GM12878 (cell line): ENCODE measurements at regions of chr7 and their contacts with region 1.

Region 1: GRCh38 chr7:95684037-95684436 is 87.7 kb upstream of the PDK4 start:
- DNase-seq: no peak
- ATAC-seq: peak; percentile 67
- H3K4me3 ChIP-seq: no peak overlapping the region
- H3K27ac ChIP-seq: no peak overlapping the region
- H3K4me1 ChIP-seq: no peaks in the 10 kb centered on the region
- H3K27me3 ChIP-seq: no peaks in the 10 kb centered on the region; a peak in 1 of 4 replicates
- CTCF ChIP-seq: peak; percentile 21 to 37 (median 26); a peak in 3 of 6 replicates
- EP300 ChIP-seq: no peak
- POLR2A ChIP-seq: no peak
- RAD21 ChIP-seq: peak; percentile 52

Region 2: GRCh38 chr7:95517458-95517857 is 166.6 kb before region 1 on chr7:
- CTCF ChIA-PET with region 1: interaction called, 655 read pairs
- POLR2A ChIA-PET with region 1: no interaction called
- RAD21 ChIA-PET with region 1: interaction called, 288 read pairs
- SMC1A ChIA-PET with region 1: interaction called, 238 read pairs
- in situ Hi-C with region 1: loop called (anchors 5 kb)
- intact Hi-C with region 1: no loop called
- DNase-seq: no peak
- ATAC-seq: peak; percentile 86
- H3K4me3 ChIP-seq: no peak overlapping the region
- H3K27ac ChIP-seq: no peak overlapping the region
- H3K4me1 ChIP-seq: no peaks in the 10 kb centered on the region
- H3K27me3 ChIP-seq: no peaks in the 10 kb centered on the region
- CTCF ChIP-seq: no peak
- EP300 ChIP-seq: no peak
- POLR2A ChIP-seq: no peak
- RAD21 ChIP-seq: no peak

Region 3: DNA sequence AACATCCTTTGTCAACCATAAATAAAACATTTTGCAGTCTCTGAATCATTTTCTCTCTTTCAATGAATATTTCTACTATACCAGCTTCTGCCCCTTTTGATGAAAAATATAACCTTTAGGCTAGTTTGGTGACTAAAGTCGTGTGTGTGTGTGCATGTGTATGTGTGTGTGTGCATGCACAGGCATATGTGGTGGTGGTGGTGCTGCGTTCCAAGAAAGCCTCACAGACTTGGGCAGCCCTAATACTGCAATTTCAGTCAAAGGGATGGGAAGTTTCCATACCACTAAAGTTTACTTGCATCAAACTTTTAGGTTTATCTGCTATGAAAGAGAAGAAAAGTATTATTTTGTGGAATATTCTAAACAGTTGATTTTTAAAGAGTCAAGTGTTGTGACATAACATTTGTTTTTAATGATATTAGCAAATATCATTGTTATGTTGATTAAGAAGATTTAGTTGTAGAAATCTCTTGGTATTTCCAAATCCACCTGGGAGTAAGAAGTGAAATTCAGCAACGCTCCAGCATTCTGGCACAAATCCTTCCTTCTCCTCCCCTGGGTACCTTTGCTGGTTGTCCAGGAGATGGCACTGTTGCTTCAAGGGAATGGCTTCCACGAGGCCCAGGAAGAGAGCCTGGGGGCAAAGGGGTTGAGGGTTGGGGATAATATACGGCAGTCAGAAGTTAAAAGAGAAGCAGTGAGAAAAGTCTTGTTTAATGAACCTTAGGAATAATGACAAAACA is 156.8 kb before region 1 on chr7:
- CTCF ChIA-PET with region 1: interaction called, 655 read pairs
- POLR2A ChIA-PET with region 1: interaction called, 3 read pairs
- RAD21 ChIA-PET with region 1: interaction called, 207 read pairs
- SMC1A ChIA-PET with region 1: interaction called, 448 read pairs
- in situ Hi-C with region 1: no loop called
- intact Hi-C with region 1: loop called (anchors 1 kb)
- DNase-seq: no peak
- ATAC-seq: peak; percentile 92
- H3K4me3 ChIP-seq: no peak overlapping the region
- H3K27ac ChIP-seq: no peak overlapping the region
- H3K4me1 ChIP-seq: no peaks in the 10 kb centered on the region
- H3K27me3 ChIP-seq: no peaks in the 10 kb centered on the region
- CTCF ChIP-seq: peak; percentile 73 to 83 (median 82)
- EP300 ChIP-seq: no peak
- POLR2A ChIP-seq: no peak
- RAD21 ChIP-seq: peak; percentile 96

Region 4: GRCh38 chr7:95534796-95535195 is 149.2 kb before region 1 on chr7:
- CTCF ChIA-PET with region 1: interaction called, 655 read pairs
- POLR2A ChIA-PET with region 1: no interaction called
- RAD21 ChIA-PET with region 1: interaction called, 207 read pairs
- SMC1A ChIA-PET with region 1: interaction called, 448 read pairs
- in situ Hi-C with region 1: no loop called
- intact Hi-C with region 1: no loop called
- DNase-seq: no peak
- ATAC-seq: no peak
- H3K4me3 ChIP-seq: no peak overlapping the region
- H3K27ac ChIP-seq: no peak overlapping the region
- H3K4me1 ChIP-seq: no peaks in the 10 kb centered on the region
- H3K27me3 ChIP-seq: no peaks in the 10 kb centered on the region; a peak in 1 of 4 replicates
- CTCF ChIP-seq: no peak
- EP300 ChIP-seq: no peak
- POLR2A ChIP-seq: no peak
- RAD21 ChIP-seq: no peak

Region 5: DNA sequence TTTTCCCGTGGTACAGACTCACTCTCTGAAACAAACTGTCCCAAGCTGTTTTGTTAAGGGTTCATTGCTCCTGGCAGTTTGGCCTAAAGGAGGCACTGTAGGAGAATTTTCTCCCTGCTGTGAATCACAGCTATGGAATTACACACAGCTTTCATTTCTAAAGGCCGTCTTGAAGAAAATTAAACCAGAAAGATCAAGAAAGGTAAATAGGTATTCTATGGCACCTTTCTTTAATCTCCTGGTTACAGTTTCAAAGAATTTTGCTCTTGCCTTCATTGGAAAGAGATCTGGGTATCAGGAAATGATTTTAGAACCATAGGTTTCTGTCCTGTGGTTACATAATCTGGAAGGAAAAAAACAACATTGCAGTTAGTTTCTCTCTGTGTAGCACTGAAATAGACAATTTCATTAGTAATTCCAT is 138.9 kb before region 1 on chr7:
- CTCF ChIA-PET with region 1: interaction called, 146 read pairs
- POLR2A ChIA-PET with region 1: no interaction called
- RAD21 ChIA-PET with region 1: interaction called, 81 read pairs
- SMC1A ChIA-PET with region 1: interaction called, 448 read pairs
- in situ Hi-C with region 1: no loop called
- intact Hi-C with region 1: no loop called
- DNase-seq: no peak
- ATAC-seq: peak; percentile 47; the same call in 1 of the 3 replicates
- H3K4me3 ChIP-seq: no peak overlapping the region
- H3K27ac ChIP-seq: no peak overlapping the region
- H3K4me1 ChIP-seq: no peaks in the 10 kb centered on the region
- H3K27me3 ChIP-seq: no peaks in the 10 kb centered on the region; a peak in 1 of 4 replicates
- CTCF ChIP-seq: peak; percentile 14 to 38 (median 32); a peak in 4 of 6 replicates
- EP300 ChIP-seq: no peak
- POLR2A ChIP-seq: no peak
- RAD21 ChIP-seq: peak; percentile 48

Region 6: GRCh38 chr7:95669513-95669912 is 14.5 kb before region 1 on chr7:
- CTCF ChIA-PET with region 1: interaction called, 36 read pairs
- POLR2A ChIA-PET with region 1: no interaction called
- RAD21 ChIA-PET with region 1: interaction called, 9 read pairs
- SMC1A ChIA-PET with region 1: interaction called, 5 read pairs
- in situ Hi-C with region 1: no loop called
- intact Hi-C with region 1: no loop called
- DNase-seq: no peak
- ATAC-seq: peak; percentile 93
- H3K4me3 ChIP-seq: no peak overlapping the region
- H3K27ac ChIP-seq: no peak overlapping the region
- H3K4me1 ChIP-seq: no peaks in the 10 kb centered on the region
- H3K27me3 ChIP-seq: no peaks in the 10 kb centered on the region
- CTCF ChIP-seq: no peak
- EP300 ChIP-seq: no peak
- POLR2A ChIP-seq: no peak
- RAD21 ChIP-seq: no peak

Region 7: GRCh38 chr7:95772298-95772770 is 88.3 kb after region 1 on chr7 and contains the start of gene DYNC1I1:
- CTCF ChIA-PET with region 1: no interaction called
- POLR2A ChIA-PET with region 1: no interaction called
- RAD21 ChIA-PET with region 1: no interaction called
- SMC1A ChIA-PET with region 1: no interaction called
- in situ Hi-C with region 1: no loop called
- intact Hi-C with region 1: no loop called
- DNase-seq: no peak
- ATAC-seq: peak; percentile 94
- H3K4me3 ChIP-seq: peak within 1 kb of the TSS; percentile 47; the same call in 1 of the 2 replicates
- H3K27ac ChIP-seq: no peak within 1 kb of the TSS
- H3K4me1 ChIP-seq: no peaks in the 10 kb centered on the region
- H3K27me3 ChIP-seq: peaks cover 2 to 7% of the 10 kb centered on the region in 2 experiments; a peak in 1 of 4 replicates
- CTCF ChIP-seq: no peak
- EP300 ChIP-seq: no peak
- POLR2A ChIP-seq: no peak
- RAD21 ChIP-seq: no peak
- polyA plus RNA-seq, gene DYNC1I1: 0.05 TPM in 1 of 2 experiments, not detected in the other

Region 8: GRCh38 chr7:95817866-95818640 is 134.0 kb after region 1 on chr7:
- CTCF ChIA-PET with region 1: no interaction called
- POLR2A ChIA-PET with region 1: no interaction called
- RAD21 ChIA-PET with region 1: no interaction called
- SMC1A ChIA-PET with region 1: no interaction called
- in situ Hi-C with region 1: no loop called
- intact Hi-C with region 1: no loop called
- DNase-seq: no peak
- ATAC-seq: no peak
- H3K4me3 ChIP-seq: no peak overlapping the region
- H3K27ac ChIP-seq: no peak overlapping the region
- H3K4me1 ChIP-seq: no peaks in the 10 kb centered on the region
- H3K27me3 ChIP-seq: no peaks in the 10 kb centered on the region
- CTCF ChIP-seq: no peak
- EP300 ChIP-seq: no peak
- POLR2A ChIP-seq: no peak
- RAD21 ChIP-seq: no peak

Region 9: GRCh38 chr7:95847061-95847460 is 163.0 kb after region 1 on chr7:
- CTCF ChIA-PET with region 1: no interaction called
- POLR2A ChIA-PET with region 1: no interaction called
- RAD21 ChIA-PET with region 1: no interaction called
- SMC1A ChIA-PET with region 1: no interaction called
- in situ Hi-C with region 1: no loop called
- intact Hi-C with region 1: no loop called
- DNase-seq: no peak
- ATAC-seq: no peak
- H3K4me3 ChIP-seq: no peak overlapping the region
- H3K27ac ChIP-seq: no peak overlapping the region
- H3K4me1 ChIP-seq: no peaks in the 10 kb centered on the region
- H3K27me3 ChIP-seq: no peaks in the 10 kb centered on the region
- CTCF ChIP-seq: no peak
- EP300 ChIP-seq: no peak
- POLR2A ChIP-seq: no peak
- RAD21 ChIP-seq: no peak